Gastrocnemius medialis (tissue), 4 donors: ENCODE measurements at regions of chr6 and their contacts with region 1.

Region 1: GRCh38 chr6:55069132-55069781 is 105.1 kb upstream of the HCRTR2 start:
- DNase-seq: no peak
- ATAC-seq: no peak
- H3K4me3 ChIP-seq: no peak overlapping the region
- H3K27ac ChIP-seq: no peak overlapping the region
- H3K4me1 ChIP-seq: peaks cover 11 to 16% of the 10 kb centered on the region in 2 donors
- H3K27me3 ChIP-seq: no peaks in the 10 kb centered on the region
- CTCF ChIP-seq: peak in 3 of 5 experiments; percentile 29 to 45 (median 44)
- POLR2A ChIP-seq: no peak

Region 2: DNA sequence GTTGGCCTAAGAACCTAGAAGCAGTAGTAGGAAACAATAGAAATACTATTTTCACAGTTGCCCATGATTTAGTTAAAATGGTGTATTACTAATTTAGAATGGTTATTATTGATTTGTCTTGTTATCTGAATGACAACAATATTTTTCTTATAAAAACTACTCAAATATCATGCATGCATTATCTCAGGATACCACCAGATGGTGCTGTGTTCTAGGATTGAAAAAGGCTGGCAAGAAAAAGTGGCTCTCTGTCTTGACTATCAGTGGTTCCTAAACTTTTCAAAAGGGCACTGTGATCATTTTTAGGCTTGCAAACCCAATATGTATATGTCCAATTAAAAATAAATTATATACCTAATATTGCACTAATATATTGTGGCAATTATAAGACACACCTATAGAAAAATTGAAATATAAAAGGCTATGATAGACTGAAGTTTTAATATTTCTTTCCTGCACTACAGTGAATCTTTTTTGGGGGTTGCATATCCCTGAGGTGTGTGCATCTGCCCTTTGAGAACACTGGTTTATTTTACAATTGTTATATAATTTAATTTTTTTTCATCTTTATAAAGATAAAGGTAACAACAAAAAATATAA is 1089.7 kb before region 1 on chr6:
- in situ Hi-C with region 1: loop called in 1 of 4 experiments (anchors 25 kb)
- intact Hi-C with region 1: loop called (anchors 5 kb)
- DNase-seq: no peak
- ATAC-seq: peak; percentile 38 to 43
- H3K4me3 ChIP-seq: no peak overlapping the region
- H3K27ac ChIP-seq: no peak overlapping the region
- H3K4me1 ChIP-seq: peaks cover 0 to under 1% of the 10 kb centered on the region in 2 donors
- H3K27me3 ChIP-seq: no peaks in the 10 kb centered on the region
- CTCF ChIP-seq: peak; percentile 78 to 85 (median 80)
- POLR2A ChIP-seq: no peak

Region 3: DNA sequence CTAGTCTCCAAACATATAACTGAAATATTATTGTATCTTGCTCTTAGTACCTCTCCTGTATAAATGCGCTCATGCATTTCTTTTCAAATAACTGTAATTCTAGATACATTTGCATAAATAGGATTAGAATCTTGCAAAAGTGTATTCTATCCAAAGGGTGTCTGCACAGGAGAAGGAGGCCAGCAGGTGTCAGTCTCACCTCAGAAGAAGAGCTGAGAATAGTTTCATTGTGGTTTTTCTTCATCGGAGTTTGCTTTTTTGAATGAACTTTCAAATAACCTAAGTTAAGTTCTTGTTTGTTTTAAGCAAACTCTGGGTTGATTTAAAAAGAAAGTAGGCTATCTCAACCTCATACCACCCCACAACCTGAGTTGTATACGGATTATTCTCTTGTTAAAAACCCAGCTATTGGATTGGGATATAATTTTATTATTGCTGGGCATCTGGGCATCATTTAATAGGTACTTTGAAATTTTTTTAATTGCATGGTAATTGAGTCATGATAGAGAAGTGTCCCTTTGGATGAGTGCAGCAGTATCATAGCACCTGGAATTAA is 1083.0 kb before region 1 on chr6:
- in situ Hi-C with region 1: loop called in 1 of 4 experiments (anchors 25 kb)
- intact Hi-C with region 1: loop called (anchors 5 kb)
- DNase-seq: peak in 1 of 2 donors; percentile 43
- ATAC-seq: peak; percentile 75
- H3K4me3 ChIP-seq: no peak overlapping the region
- H3K27ac ChIP-seq: peak overlapping the region; percentile 44 to 62 (median 56)
- H3K4me1 ChIP-seq: peaks cover 27 to 41% of the 10 kb centered on the region in 2 donors
- H3K27me3 ChIP-seq: no peaks in the 10 kb centered on the region
- CTCF ChIP-seq: peak; percentile 66 to 82 (median 79)
- POLR2A ChIP-seq: no peak

Region 4: DNA sequence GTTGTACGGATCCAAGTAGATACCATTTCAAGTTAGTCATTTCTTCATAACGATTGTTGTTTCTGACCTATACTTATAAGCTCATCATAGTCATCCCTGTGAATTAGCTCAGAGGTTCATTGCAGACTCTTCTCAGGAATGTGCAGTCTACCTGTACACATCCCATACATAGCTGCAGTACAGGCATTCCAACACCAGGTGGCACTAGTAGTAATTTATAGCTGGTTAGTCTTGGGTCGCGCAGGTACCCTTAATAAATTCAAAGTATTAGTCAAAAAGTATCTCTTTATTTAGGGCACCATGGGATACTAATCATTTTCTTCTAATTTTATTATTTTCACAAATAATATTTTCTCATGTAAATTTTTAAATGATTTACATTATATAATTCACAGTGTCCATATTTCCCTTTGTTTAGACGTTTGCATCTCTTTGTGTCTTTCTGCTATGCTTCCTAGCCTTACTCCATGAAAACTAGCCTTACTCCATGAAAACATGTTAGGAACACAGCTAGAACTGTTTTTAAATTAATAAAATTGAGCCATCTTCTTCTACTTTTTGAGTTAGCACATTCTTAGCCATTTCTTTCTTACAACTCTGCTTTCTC is 351.3 kb before region 1 on chr6:
- in situ Hi-C with region 1: loop called in 1 of 4 experiments (anchors 25 kb)
- intact Hi-C with region 1: loop called (anchors 2 kb)
- DNase-seq: peak in 1 of 2 donors; percentile 33
- ATAC-seq: peak in 1 of 2 donors; percentile 60
- H3K4me3 ChIP-seq: no peak overlapping the region
- H3K27ac ChIP-seq: no peak overlapping the region
- H3K4me1 ChIP-seq: no peaks in the 10 kb centered on the region
- H3K27me3 ChIP-seq: no peaks in the 10 kb centered on the region
- CTCF ChIP-seq: peak; percentile 62 to 78 (median 63)
- POLR2A ChIP-seq: no peak

Region 5: DNA sequence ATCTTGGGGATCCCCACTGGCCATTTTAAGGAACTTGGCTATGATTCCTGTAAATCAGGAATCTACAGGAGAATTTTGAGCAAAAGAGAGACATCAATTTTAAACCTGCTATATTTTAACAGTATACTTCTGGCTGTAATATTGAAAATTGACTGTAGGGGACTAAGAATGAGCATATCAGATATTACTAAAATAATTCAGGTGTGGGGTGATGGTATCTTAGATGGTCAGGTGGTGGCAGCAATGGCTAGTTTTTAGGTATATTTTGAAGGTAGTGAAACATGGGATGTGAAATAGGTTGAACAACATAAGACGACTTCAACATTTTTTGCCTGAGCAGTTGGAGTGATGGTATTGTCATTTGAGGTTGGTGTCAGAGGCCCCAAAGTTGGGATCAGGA is 190.6 kb before region 1 on chr6:
- in situ Hi-C with region 1: no loop called
- intact Hi-C with region 1: loop called (anchors 2 kb)
- DNase-seq: no peak
- ATAC-seq: no peak
- H3K4me3 ChIP-seq: no peak overlapping the region
- H3K27ac ChIP-seq: no peak overlapping the region
- H3K4me1 ChIP-seq: peaks cover 0 to 3% of the 10 kb centered on the region in 2 donors
- H3K27me3 ChIP-seq: no peaks in the 10 kb centered on the region
- CTCF ChIP-seq: no peak
- POLR2A ChIP-seq: no peak